ENCODE measurements at regions of chr1 and their contacts with region 1.

Region 1: GRCh38 chr1:235328357-235329138 is at the start of gene GGPS1:
- DNase-seq: peak; percentile 99
- ATAC-seq: peak; percentile 92
- H3K4me3 ChIP-seq: peak within 1 kb of the TSS; percentile 95 to 99
- H3K27ac ChIP-seq: peak within 1 kb of the TSS; percentile 98
- H3K4me1 ChIP-seq: peaks cover 26% of the 10 kb centered on the region
- H3K27me3 ChIP-seq: no peaks in the 10 kb centered on the region
- CTCF ChIP-seq: no peak
- total RNA-seq, gene GGPS1: 60.6 TPM

Region 2: GRCh38 chr1:235253219-235253962 is 75.2 kb before region 1 on chr1:
- CTCF ChIA-PET with region 1: no interaction called
- POLR2A ChIA-PET with region 1: no interaction called
- in situ Hi-C with region 1: no loop called
- intact Hi-C with region 1: loop called (anchors 5 kb)
- DNase-seq: peak; percentile 69
- ATAC-seq: peak; percentile 99
- H3K4me3 ChIP-seq: no peak overlapping the region
- H3K27ac ChIP-seq: no peak overlapping the region
- H3K4me1 ChIP-seq: peaks cover 3% of the 10 kb centered on the region; the same call in 1 of the 2 replicates
- H3K27me3 ChIP-seq: no peaks in the 10 kb centered on the region
- CTCF ChIP-seq: peak; percentile 96

Region 3: GRCh38 chr1:235307158-235308124 is 21.1 kb before region 1 on chr1:
- CTCF ChIA-PET with region 1: interaction called, 12 read pairs
- POLR2A ChIA-PET with region 1: interaction called, 14 read pairs
- in situ Hi-C with region 1: no loop called
- intact Hi-C with region 1: no loop called
- DNase-seq: no peak
- ATAC-seq: no peak; the same call in 1 of the 2 replicates
- H3K4me3 ChIP-seq: no peak overlapping the region
- H3K27ac ChIP-seq: no peak overlapping the region
- H3K4me1 ChIP-seq: peaks cover 9% of the 10 kb centered on the region; the same call in 1 of the 2 replicates
- H3K27me3 ChIP-seq: no peaks in the 10 kb centered on the region
- CTCF ChIP-seq: no peak

Measured in Panc1 (cell line).